ENCODE measurements at regions of chr2 and their contacts with region 1.

Region 1: GRCh38 chr2:61471905-61472805 is 1.3 kb upstream of the USP34 start:
- DNase-seq: peak in 22 of 35 experiments; percentile 5 to 63 (median 22)
- ATAC-seq: peak in 1 of 4 experiments; percentile 8
- H3K4me3 ChIP-seq: peak overlapping the region; percentile 72 to 87
- H3K4me3 Mint-ChIP-seq: peak overlapping the region; percentile 85 to 93 (median 87)
- H3K27ac ChIP-seq: peak overlapping the region; percentile 95
- H3K27ac Mint-ChIP-seq: peak overlapping the region; percentile 95 to 96
- H3K4me1 ChIP-seq: peaks cover 13 to 29% of the 10 kb centered on the region in 2 experiments
- H3K4me1 Mint-ChIP-seq: peaks cover 33 to 41% (median 33%) of the 10 kb centered on the region in 3 donors
- H3K27me3 ChIP-seq: no peaks in the 10 kb centered on the region
- H3K27me3 Mint-ChIP-seq: no peaks in the 10 kb centered on the region

Region 2: GRCh38 chr2:61485281-61485680 is 13.1 kb after region 1 on chr2:
- CTCF ChIA-PET with region 1: interaction called, 5 to 9 read pairs
- POLR2A ChIA-PET with region 1: interaction called in 1 of 2 experiments, 10 read pairs
- DNase-seq: no peak
- ATAC-seq: no peak
- H3K4me3 ChIP-seq: no peak overlapping the region
- H3K4me3 Mint-ChIP-seq: no peak overlapping the region
- H3K27ac ChIP-seq: no peak overlapping the region
- H3K27ac Mint-ChIP-seq: no peak overlapping the region
- H3K4me1 ChIP-seq: no peaks in the 10 kb centered on the region
- H3K4me1 Mint-ChIP-seq: no peaks in the 10 kb centered on the region
- H3K27me3 ChIP-seq: no peaks in the 10 kb centered on the region
- H3K27me3 Mint-ChIP-seq: no peaks in the 10 kb centered on the region